ENCODE measurements at regions of chr20 and their contacts with region 1.

Region 1: GRCh38 chr20:59848182-59848581 is 85.3 kb downstream of the SYCP2 start:
- DNase-seq: no peak
- H3K4me3 ChIP-seq: no peak overlapping the region
- H3K27ac ChIP-seq: no peak overlapping the region
- H3K4me1 ChIP-seq: no peaks in the 10 kb centered on the region
- H3K27me3 ChIP-seq: no peaks in the 10 kb centered on the region
- CTCF ChIP-seq: no peak

Region 2: DNA sequence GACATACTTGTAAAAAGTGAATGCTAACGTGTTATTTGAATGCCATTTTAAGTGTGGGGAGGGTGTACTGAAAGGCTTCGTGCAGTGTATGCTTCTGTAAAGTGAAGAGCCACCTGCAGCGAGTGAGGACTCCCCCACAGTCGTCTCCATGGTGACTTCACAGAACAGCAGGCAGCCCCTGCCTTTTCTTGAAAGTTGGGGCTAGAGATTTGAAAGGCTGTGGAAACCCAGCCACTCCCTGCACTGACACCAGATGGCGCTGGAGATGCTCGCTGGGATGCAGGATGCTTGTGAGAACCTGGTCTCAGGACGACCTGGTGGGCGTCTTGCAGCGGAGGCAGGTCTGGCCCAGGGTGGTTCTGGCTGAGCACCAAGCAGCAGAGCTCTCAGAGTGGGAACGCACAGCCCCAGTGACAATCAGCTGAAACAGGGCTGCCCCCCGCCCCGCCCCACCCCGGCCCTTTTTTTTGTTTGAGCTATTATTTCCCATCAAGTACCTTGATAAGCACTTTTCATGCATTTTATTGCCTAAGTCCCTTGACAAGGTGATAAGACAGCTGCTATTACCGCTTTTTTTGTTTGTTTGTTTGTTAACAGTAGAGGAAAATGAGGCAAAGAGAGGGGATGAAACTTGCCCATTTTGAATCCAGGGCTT is 65.1 kb before region 1 on chr20:
- intact Hi-C with region 1: loop called (anchors 10 kb)
- DNase-seq: peak in 4 of 5 donors; percentile 79 to 85 (median 84)
- H3K4me3 ChIP-seq: no peak overlapping the region
- H3K27ac ChIP-seq: no peak overlapping the region
- H3K4me1 ChIP-seq: no peaks in the 10 kb centered on the region
- H3K27me3 ChIP-seq: no peaks in the 10 kb centered on the region
- CTCF ChIP-seq: peak; percentile 59

Region 3: GRCh38 chr20:59994697-59995122 is 146.5 kb after region 1 on chr20:
- intact Hi-C with region 1: no loop called
- DNase-seq: no peak
- H3K4me3 ChIP-seq: no peak overlapping the region
- H3K27ac ChIP-seq: no peak overlapping the region
- H3K4me1 ChIP-seq: no peaks in the 10 kb centered on the region
- H3K27me3 ChIP-seq: no peaks in the 10 kb centered on the region
- CTCF ChIP-seq: no peak